Gastrocnemius medialis (tissue), 4 donors: ENCODE measurements at regions of chr2 and their contacts with region 1.

Region 1: GRCh38 chr2:213934560-213934959 is 476.3 kb upstream of the VWC2L start:
- DNase-seq: no peak
- ATAC-seq: no peak
- H3K4me3 ChIP-seq: no peak overlapping the region
- H3K27ac ChIP-seq: no peak overlapping the region
- H3K4me1 ChIP-seq: no peaks in the 10 kb centered on the region
- H3K27me3 ChIP-seq: no peaks in the 10 kb centered on the region
- CTCF ChIP-seq: peak in 2 of 5 experiments; percentile 6 to 34
- POLR2A ChIP-seq: no peak

Region 2: DNA sequence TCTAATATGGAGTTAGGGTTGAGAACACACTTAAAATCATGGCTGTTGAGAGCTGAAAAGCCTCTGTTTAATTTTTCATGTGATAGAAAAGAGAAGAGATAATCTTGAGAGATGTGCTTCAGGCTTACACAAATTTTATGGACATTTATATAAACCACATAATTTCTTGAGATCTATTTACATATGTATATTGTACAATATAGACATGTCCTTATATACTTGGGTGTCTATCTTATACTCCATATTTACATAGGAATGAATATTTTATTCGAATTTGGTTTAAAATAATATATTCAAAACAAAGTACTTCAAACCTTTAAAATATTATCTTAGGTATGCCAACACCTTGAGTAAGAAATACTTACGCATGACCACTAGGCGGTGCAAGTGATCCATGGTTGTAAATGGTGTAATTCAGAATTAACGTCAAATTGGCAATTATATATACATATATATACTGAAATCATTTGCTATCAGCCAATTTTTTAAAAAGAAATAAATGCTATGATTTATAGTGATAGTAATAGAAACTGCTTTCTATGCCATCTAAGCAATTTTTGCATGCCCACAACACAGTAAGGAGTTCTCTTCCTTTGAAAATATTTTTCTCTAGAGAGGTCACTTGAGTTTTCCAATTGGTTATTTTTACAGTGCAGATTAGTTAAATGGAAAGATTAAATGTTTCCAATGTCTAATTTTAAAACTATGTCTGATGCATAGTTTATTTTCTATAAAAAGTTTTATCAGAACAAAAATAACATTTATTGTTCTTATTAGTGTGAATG is 687.9 kb before region 1 on chr2:
- in situ Hi-C with region 1: loop called in 1 of 4 experiments (anchors 25 kb)
- intact Hi-C with region 1: no loop called
- DNase-seq: no peak
- ATAC-seq: no peak
- H3K4me3 ChIP-seq: no peak overlapping the region
- H3K27ac ChIP-seq: no peak overlapping the region
- H3K4me1 ChIP-seq: no peaks in the 10 kb centered on the region
- H3K27me3 ChIP-seq: no peaks in the 10 kb centered on the region
- CTCF ChIP-seq: peak in 4 of 5 experiments; percentile 53 to 66 (median 56)
- POLR2A ChIP-seq: no peak